IMR-90 (cell line): ENCODE measurements at regions of chr1 and their contacts with region 1.

Region 1: DNA sequence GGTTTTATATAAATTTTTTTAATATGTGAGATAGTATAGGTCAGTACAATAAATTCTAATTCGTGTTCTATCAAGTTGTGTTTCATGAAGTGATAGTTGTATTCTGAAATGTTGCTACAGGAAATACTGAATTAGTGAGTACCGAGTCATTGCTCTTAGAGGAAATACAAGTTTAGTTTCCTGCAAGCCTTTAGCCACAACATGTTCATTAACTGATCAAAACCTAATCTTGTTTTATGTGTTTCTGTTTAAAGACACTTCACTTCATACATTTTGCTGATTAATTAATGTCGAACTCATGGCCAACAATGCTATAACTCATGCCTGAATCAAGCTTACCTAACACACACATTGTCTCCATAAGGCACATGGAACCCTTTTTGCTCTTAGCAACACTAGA is 43.6 kb downstream of the LRRC7 start:
- DNase-seq: no peak
- ATAC-seq: no peak
- H3K4me3 ChIP-seq: no peak overlapping the region
- H3K27ac ChIP-seq: no peak overlapping the region
- H3K4me1 ChIP-seq: no peaks in the 10 kb centered on the region
- H3K27me3 ChIP-seq: no peaks in the 10 kb centered on the region
- CTCF ChIP-seq: no peak
- POLR2A ChIP-seq: no peak
- RAD21 ChIP-seq: no peak

Region 2: DNA sequence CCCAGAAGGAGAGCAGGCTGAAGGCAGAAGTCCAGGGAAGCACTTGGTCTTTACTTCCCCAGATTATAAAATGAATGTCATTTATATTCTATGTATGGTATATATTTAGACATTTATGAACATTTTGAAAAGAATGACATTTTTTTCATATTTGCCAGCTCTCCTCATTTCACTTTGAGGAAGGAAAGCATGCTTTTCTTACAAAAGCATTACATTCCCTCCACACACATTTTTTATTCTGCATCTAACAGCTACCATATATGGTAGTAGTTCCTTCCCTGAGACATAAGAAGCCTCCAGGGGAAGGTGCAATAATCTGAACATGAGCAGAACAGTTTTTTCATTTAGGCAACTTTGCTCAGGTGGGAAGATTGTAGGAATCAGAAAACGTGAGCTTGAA is 50.4 kb after region 1 on chr1:
- CTCF ChIA-PET with region 1: no interaction called
- POLR2A ChIA-PET with region 1: no interaction called
- dilution Hi-C with region 1: no loop called
- in situ Hi-C with region 1: no loop called
- intact Hi-C with region 1: loop called (anchors 1 kb)
- DNase-seq: no peak
- ATAC-seq: no peak
- H3K4me3 ChIP-seq: no peak overlapping the region
- H3K27ac ChIP-seq: no peak overlapping the region
- H3K4me1 ChIP-seq: no peaks in the 10 kb centered on the region
- H3K27me3 ChIP-seq: no peaks in the 10 kb centered on the region
- CTCF ChIP-seq: no peak
- POLR2A ChIP-seq: no peak
- RAD21 ChIP-seq: no peak